Naive thymus-derived CD4-positive, alpha-beta T cell (primary cell): ENCODE measurements at regions of chr13 and their contacts with region 1.

Region 1: GRCh38 chr13:99200432-99201167 is at the start of gene UBAC2:
- DNase-seq: peak; percentile 95 to 99 (median 98)
- ATAC-seq: peak; percentile 88
- H3K4me3 ChIP-seq: peak within 1 kb of the TSS; percentile 74
- H3K4me3 Mint-ChIP-seq: peak within 1 kb of the TSS; percentile 90 to 100 (median 97)
- H3K27ac ChIP-seq: peak within 1 kb of the TSS; percentile 99
- H3K27ac Mint-ChIP-seq: peak within 1 kb of the TSS; percentile 92 to 98 (median 95)
- H3K4me1 ChIP-seq: peaks cover 38 to 51% of the 10 kb centered on the region in 2 donors
- H3K4me1 Mint-ChIP-seq: peaks cover 42 to 74% (median 61%) of the 10 kb centered on the region in 7 donors
- H3K27me3 ChIP-seq: no peaks in the 10 kb centered on the region
- H3K27me3 Mint-ChIP-seq: peaks cover 0 to 2% (median 0%) of the 10 kb centered on the region in 5 donors
- total RNA-seq, gene UBAC2: 63.3 to 114 (median 90.2) TPM

Region 2: GRCh38 chr13:99162538-99162937 is 38.1 kb before region 1 on chr13:
- CTCF ChIA-PET with region 1: no interaction called
- POLR2A ChIA-PET with region 1: no interaction called
- intact Hi-C with region 1: no loop called
- DNase-seq: no peak
- ATAC-seq: no peak
- H3K4me3 ChIP-seq: no peak overlapping the region
- H3K4me3 Mint-ChIP-seq: no peak overlapping the region
- H3K27ac ChIP-seq: no peak overlapping the region
- H3K27ac Mint-ChIP-seq: no peak overlapping the region
- H3K4me1 ChIP-seq: no peaks in the 10 kb centered on the region
- H3K4me1 Mint-ChIP-seq: peaks cover 0 to 3% (median 0%) of the 10 kb centered on the region in 7 donors
- H3K27me3 ChIP-seq: no peaks in the 10 kb centered on the region
- H3K27me3 Mint-ChIP-seq: peaks cover 0 to 38% (median 13%) of the 10 kb centered on the region in 5 donors

Region 3: GRCh38 chr13:99176309-99177276 is 24.0 kb before region 1 on chr13:
- CTCF ChIA-PET with region 1: interaction called, 20 read pairs
- POLR2A ChIA-PET with region 1: interaction called, 5 read pairs
- intact Hi-C with region 1: loop called (anchors 1 to 2 kb)
- DNase-seq: peak; percentile 54 to 79 (median 71)
- ATAC-seq: peak; percentile 95
- H3K4me3 ChIP-seq: peak overlapping the region; percentile 1
- H3K4me3 Mint-ChIP-seq: peak overlapping the region; percentile 39 to 81 (median 72)
- H3K27ac ChIP-seq: no peak overlapping the region
- H3K27ac Mint-ChIP-seq: peak overlapping the region in 8 of 9 donors; percentile 34 to 77 (median 54)
- H3K4me1 ChIP-seq: peaks cover 22 to 24% of the 10 kb centered on the region in 2 donors
- H3K4me1 Mint-ChIP-seq: peaks cover 26 to 44% (median 39%) of the 10 kb centered on the region in 7 donors
- H3K27me3 ChIP-seq: no peaks in the 10 kb centered on the region
- H3K27me3 Mint-ChIP-seq: peaks cover 0 to 13% (median 0%) of the 10 kb centered on the region in 5 donors

Region 4: DNA sequence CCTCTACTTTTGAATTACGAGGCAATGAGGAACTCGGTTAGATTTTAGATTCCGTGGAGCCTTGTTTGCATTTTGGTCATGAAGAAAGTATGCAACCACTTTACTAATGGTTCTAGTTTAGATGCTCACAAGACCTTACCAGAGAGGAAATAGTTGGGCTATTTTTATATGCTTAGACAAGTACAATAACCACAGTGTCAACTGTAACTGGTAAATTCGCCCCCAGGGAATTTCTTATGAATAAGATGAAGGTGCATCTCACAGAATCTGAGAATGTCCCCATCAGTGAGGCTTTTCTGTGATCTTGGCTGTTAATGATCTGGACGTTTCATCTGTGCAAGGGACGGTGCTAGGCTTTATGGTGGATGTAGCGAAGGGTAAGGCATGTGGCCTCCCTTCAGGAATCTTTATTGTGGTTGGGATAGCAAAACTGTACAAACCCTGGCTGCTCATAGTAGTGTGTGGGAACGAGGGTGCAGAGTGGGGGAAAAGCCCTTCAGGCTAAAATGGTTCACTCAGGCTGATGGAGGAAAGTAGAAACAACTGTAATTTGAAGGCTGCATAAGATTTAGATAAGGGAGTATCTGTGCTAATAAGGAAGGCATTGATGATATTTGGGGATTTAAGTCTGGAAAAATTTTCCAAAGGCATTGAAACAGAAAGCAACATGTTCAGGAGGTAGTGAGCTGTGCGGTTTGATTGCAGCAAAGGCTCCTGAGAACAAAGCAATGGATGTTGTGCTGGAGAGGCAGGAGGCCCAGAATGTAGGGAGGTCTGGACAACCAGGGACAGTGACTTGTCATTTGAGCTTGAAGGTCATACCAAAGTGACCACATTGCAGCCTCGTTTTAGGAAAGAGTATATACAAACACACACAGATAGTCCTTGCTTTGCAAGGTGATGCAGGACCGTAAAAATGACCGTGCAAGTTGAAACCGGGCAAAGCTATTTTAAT is 28.4 kb after region 1 on chr13:
- CTCF ChIA-PET with region 1: interaction called, 4 read pairs
- POLR2A ChIA-PET with region 1: interaction called, 23 read pairs
- intact Hi-C with region 1: no loop called
- DNase-seq: no peak
- ATAC-seq: peak; percentile 48
- H3K4me3 ChIP-seq: peak overlapping the region; percentile 43
- H3K4me3 Mint-ChIP-seq: peak overlapping the region; percentile 60 to 86 (median 80)
- H3K27ac ChIP-seq: peak overlapping the region; percentile 35
- H3K27ac Mint-ChIP-seq: peak overlapping the region; percentile 55 to 94 (median 80)
- H3K4me1 ChIP-seq: peaks cover 55 to 60% of the 10 kb centered on the region in 2 donors
- H3K4me1 Mint-ChIP-seq: peaks cover 56 to 89% (median 70%) of the 10 kb centered on the region in 7 donors
- H3K27me3 ChIP-seq: no peaks in the 10 kb centered on the region
- H3K27me3 Mint-ChIP-seq: no peaks in the 10 kb centered on the region

Region 5: DNA sequence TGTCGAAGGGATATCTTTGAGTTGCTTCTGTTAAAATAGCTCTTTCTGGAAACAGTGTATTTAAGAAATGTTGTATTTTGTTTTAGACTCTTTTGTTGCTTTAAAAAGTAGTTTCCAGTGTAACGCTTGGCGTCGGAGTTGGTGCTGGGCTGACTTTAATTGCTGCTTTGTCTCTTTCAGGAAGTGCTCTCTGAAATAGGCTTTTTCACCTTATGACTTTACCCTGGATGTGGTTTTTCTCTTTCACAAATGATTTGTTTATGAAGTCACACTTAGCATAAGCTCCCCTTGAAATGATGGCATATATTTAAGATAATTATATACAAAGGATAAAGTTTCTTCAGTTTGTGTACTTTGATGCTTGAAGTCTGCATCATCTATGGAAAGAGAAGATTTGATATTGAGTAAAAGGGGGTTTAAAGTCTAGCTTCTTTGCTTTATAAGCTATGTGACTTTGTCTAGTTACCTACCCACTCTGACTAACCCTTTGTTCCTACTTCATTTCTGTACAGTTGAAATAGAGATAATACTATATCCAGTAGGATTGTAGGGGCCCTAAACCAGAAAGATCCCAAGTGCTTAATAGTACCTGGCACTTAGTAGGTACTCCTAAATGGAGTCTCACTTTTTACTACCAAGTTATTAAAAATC is 57.7 kb after region 1 on chr13 and contains the start of gene GPR18:
- CTCF ChIA-PET with region 1: interaction called, 242 read pairs
- POLR2A ChIA-PET with region 1: interaction called, 68 read pairs
- intact Hi-C with region 1: loop called (anchors 1 kb)
- DNase-seq: peak in 7 of 9 donors; percentile 56 to 81 (median 70)
- ATAC-seq: peak; percentile 89
- H3K4me3 ChIP-seq: peak within 1 kb of the TSS; percentile 86
- H3K4me3 Mint-ChIP-seq: peak within 1 kb of the TSS; percentile 86 to 99 (median 94)
- H3K27ac ChIP-seq: peak within 1 kb of the TSS; percentile 81
- H3K27ac Mint-ChIP-seq: peak within 1 kb of the TSS; percentile 90 to 97 (median 95)
- H3K4me1 ChIP-seq: peaks cover 27 to 40% of the 10 kb centered on the region in 2 donors
- H3K4me1 Mint-ChIP-seq: peaks cover 30 to 80% (median 66%) of the 10 kb centered on the region in 7 donors
- H3K27me3 ChIP-seq: no peaks in the 10 kb centered on the region
- H3K27me3 Mint-ChIP-seq: no peaks in the 10 kb centered on the region
- total RNA-seq, gene GPR18: 11.5 to 40.4 (median 21.1) TPM

Region 6: DNA sequence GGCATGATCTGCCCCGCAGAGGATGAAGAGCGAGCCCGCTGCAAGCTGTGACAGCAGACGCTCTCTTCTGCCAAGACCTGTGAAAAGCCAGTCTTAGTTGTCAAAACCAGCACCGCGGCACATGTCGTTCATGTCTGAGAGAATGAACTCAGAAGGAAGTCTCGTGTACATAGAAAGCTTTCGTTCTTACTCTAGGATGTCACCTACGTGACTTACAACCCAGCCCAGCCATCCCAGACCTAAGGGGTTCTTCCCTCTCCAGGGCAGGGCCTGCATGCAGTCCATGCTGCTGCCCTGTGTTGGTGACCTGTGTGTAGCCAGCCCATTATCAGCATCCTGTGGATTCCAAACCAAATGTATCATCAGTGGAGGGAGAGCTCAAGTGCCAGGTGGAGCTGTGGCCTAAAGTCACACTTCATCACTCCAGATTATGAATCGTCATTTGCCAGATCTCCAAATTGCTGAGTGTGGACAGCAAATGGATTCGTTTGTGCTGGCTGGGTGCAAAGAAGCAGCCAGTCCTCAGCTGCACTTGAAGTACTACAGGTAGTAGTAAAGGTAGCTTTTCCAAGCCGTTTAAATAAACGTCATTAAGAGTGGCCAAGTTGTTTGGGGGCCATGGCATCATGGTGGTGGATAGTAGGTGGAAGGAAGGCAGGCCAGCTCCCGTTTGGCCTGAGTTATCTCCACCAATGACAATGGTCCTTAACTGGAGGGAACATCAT is 180.5 kb after region 1 on chr13:
- CTCF ChIA-PET with region 1: no interaction called
- POLR2A ChIA-PET with region 1: interaction called, 11 read pairs
- intact Hi-C with region 1: loop called (anchors 2 to 5 kb)
- DNase-seq: peak in 8 of 9 donors; percentile 55 to 73 (median 62)
- ATAC-seq: peak; percentile 51
- H3K4me3 ChIP-seq: peak overlapping the region; percentile 1
- H3K4me3 Mint-ChIP-seq: peak overlapping the region; percentile 63 to 85 (median 76)
- H3K27ac ChIP-seq: peak overlapping the region; percentile 85
- H3K27ac Mint-ChIP-seq: peak overlapping the region; percentile 94 to 99 (median 98)
- H3K4me1 ChIP-seq: peaks cover 77 to 88% of the 10 kb centered on the region in 2 donors
- H3K4me1 Mint-ChIP-seq: peaks cover 48 to 100% (median 98%) of the 10 kb centered on the region in 7 donors
- H3K27me3 ChIP-seq: no peaks in the 10 kb centered on the region
- H3K27me3 Mint-ChIP-seq: no peaks in the 10 kb centered on the region

Region 7: GRCh38 chr13:99995589-99996380 is 795.2 kb after region 1 on chr13:
- CTCF ChIA-PET with region 1: no interaction called
- POLR2A ChIA-PET with region 1: no interaction called
- intact Hi-C with region 1: no loop called
- DNase-seq: peak in 1 of 9 donors; percentile 26
- ATAC-seq: no peak
- H3K4me3 ChIP-seq: no peak overlapping the region
- H3K4me3 Mint-ChIP-seq: peak overlapping the region in 4 of 10 donors; percentile 23 to 57 (median 32)
- H3K27ac ChIP-seq: no peak overlapping the region
- H3K27ac Mint-ChIP-seq: peak overlapping the region in 5 of 9 donors; percentile 22 to 81 (median 63)
- H3K4me1 ChIP-seq: peaks cover 0 to 4% of the 10 kb centered on the region in 2 donors
- H3K4me1 Mint-ChIP-seq: peaks cover 0 to 26% (median 11%) of the 10 kb centered on the region in 7 donors
- H3K27me3 ChIP-seq: peaks cover 39 to 68% of the 10 kb centered on the region in 2 donors
- H3K27me3 Mint-ChIP-seq: peaks cover 78 to 88% (median 83%) of the 10 kb centered on the region in 5 donors